Activated CD4-positive, alpha-beta T cell treated with anti-CD3 and anti-CD28 coated beads for 36 hours (primary cell): ENCODE measurements at regions of chr1 and their contacts with region 1.

Region 1: GRCh38 chr1:212699104-212699624 is 476 bp downstream of the BATF3 start:
- DNase-seq: peak; percentile 82
- ATAC-seq: peak; percentile 68
- H3K4me3 Mint-ChIP-seq: peak overlapping the region; percentile 77
- H3K27ac Mint-ChIP-seq: peak overlapping the region; percentile 88
- H3K4me1 Mint-ChIP-seq: peaks cover 57% of the 10 kb centered on the region
- H3K27me3 Mint-ChIP-seq: peaks cover 5% of the 10 kb centered on the region

Region 2: DNA sequence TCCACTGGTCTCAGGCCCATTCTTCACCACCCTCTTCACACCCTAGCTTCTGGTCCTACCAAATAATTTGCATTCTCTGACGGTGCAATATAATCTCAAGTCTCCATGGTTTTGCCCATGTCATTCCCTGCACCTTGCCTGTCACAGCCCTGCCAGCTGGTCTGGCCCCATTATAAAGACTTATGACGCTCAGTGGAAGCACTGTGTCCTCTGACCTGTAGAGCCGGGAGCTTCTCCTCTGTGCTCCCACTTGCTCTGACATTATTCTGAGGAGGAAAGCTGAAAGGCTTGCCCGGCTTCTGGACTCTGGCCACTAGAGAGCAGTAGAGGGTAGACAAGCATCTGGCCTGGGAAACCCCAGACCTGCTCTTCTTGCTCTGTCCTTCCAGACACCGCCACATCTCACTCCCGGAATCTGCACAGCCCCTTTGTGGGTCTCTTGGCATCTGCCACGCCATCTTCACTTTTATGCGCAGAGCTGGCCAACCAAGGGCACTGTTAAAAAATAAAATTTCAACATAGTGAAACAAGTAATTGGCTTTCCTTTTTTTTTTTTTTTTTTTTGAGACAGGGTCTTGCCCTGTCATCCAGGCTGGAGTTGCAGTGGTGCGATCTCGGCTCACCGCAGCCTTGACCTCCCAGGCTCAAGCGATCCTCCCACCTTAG is 222.0 kb before region 1 on chr1:
- CTCF ChIA-PET with region 1: interaction called, 3 read pairs
- POLR2A ChIA-PET with region 1: interaction called, 3 read pairs
- intact Hi-C with region 1: loop called in 1 of 2 experiments (anchors 2 kb)
- DNase-seq: peak; percentile 87
- ATAC-seq: peak; percentile 93
- H3K4me3 Mint-ChIP-seq: no peak overlapping the region
- H3K27ac Mint-ChIP-seq: no peak overlapping the region
- H3K4me1 Mint-ChIP-seq: peaks cover 11% of the 10 kb centered on the region
- H3K27me3 Mint-ChIP-seq: peaks cover 2% of the 10 kb centered on the region

Region 3: GRCh38 chr1:212665241-212666115 is 33.7 kb before region 1 on chr1:
- CTCF ChIA-PET with region 1: interaction called, 11 read pairs
- POLR2A ChIA-PET with region 1: interaction called, 3 read pairs
- intact Hi-C with region 1: loop called (anchors 1 to 5 kb)
- DNase-seq: peak; percentile 91
- ATAC-seq: peak; percentile 98
- H3K4me3 Mint-ChIP-seq: peak overlapping the region; percentile 57
- H3K27ac Mint-ChIP-seq: peak overlapping the region; percentile 77
- H3K4me1 Mint-ChIP-seq: peaks cover 15% of the 10 kb centered on the region
- H3K27me3 Mint-ChIP-seq: peaks cover 3% of the 10 kb centered on the region

Region 4: DNA sequence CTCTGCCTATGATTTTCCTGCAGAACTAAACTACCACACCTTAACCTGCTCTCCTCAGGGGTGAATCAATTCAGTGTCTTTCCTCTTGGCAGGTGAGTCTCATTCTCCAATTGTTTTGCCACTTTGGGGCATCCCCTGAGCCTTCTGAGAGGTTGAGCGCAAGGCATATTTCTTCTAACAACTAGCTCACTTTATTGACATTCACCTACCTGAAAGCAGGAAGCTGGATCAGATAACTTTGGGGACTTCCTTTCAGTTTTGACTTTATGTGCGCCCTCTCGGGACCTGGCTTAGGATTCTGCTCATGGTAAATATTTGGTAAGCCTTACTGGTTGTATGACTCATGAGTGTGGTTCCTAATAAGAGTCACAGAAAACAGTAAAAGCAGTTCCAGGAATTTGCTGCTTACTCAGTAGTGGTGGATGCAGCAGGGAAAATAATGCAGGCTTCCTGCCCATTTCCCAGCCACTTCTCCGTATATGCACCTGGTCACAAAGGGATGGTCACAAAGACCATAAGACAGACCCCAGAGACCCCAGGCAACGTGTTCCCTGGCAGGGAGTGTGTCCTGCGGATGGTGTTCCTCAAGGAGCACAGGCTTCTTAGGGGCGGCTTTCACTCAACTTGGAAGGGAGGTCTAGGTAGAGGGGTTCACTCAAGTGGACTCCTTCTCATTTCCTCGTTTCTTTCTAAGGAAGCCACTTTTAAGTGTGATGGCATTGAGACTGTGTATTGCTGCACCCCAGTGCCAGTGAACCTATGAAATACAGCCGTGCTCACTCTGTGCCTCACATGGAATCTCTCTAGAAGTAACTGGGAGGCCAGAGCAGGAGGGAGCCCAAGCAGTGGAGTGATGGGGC is 22.5 kb after region 1 on chr1:
- CTCF ChIA-PET with region 1: interaction called, 7 read pairs
- POLR2A ChIA-PET with region 1: interaction called, 19 read pairs
- intact Hi-C with region 1: loop called (anchors 2 kb)
- DNase-seq: peak; percentile 66
- ATAC-seq: peak; percentile 82
- H3K4me3 Mint-ChIP-seq: peak overlapping the region; percentile 48
- H3K27ac Mint-ChIP-seq: peak overlapping the region; percentile 68
- H3K4me1 Mint-ChIP-seq: peaks cover 48% of the 10 kb centered on the region
- H3K27me3 Mint-ChIP-seq: peaks cover 5% of the 10 kb centered on the region

Region 5: GRCh38 chr1:212760126-212760823 is 61.1 kb after region 1 on chr1:
- CTCF ChIA-PET with region 1: interaction called, 9 read pairs
- POLR2A ChIA-PET with region 1: no interaction called
- intact Hi-C with region 1: loop called in 1 of 2 experiments (anchors 1 kb)
- DNase-seq: peak; percentile 83
- ATAC-seq: peak; percentile 96
- H3K4me3 Mint-ChIP-seq: no peak overlapping the region
- H3K27ac Mint-ChIP-seq: no peak overlapping the region
- H3K4me1 Mint-ChIP-seq: peaks cover 22% of the 10 kb centered on the region
- H3K27me3 Mint-ChIP-seq: no peaks in the 10 kb centered on the region

Region 6: DNA sequence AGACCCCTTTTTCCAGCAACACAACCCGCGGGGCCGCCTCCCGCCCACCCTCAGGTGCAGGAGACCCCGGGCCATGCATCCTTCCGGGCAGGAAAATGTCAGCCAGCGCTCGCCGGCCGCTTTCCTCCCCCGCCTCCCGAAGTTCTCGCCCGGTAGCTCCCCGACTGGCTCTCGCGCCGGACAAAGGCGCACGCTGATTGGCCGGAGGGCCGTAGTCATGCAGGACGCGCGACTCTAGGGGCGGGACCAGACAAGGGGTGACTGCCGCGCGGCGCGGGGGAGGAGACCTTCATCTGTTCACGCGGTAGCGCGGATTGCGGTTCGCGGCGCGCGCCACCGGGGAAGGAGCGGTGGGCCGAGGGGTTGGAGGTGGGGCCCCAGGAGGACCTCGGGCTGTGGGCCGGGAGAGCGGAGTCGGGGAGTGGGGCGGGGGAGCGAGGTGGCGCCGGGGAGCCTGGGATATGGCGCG is 158.9 kb after region 1 on chr1 and contains the start of gene FLVCR1:
- CTCF ChIA-PET with region 1: no interaction called
- POLR2A ChIA-PET with region 1: no interaction called
- intact Hi-C with region 1: loop called in 1 of 2 experiments (anchors 2 kb)
- DNase-seq: peak; percentile 98
- ATAC-seq: peak; percentile 98
- H3K4me3 Mint-ChIP-seq: no peak within 1 kb of the TSS
- H3K27ac Mint-ChIP-seq: peak within 1 kb of the TSS; percentile 92
- H3K4me1 Mint-ChIP-seq: peaks cover 15% of the 10 kb centered on the region
- H3K27me3 Mint-ChIP-seq: no peaks in the 10 kb centered on the region
- total RNA-seq, gene FLVCR1: 13.5 to 13.9 TPM